ENCODE measurements at regions of chr12 and their contacts with region 1.

Region 1: GRCh38 chr12:109093022-109093918 is at the start of gene ALKBH2:
- DNase-seq: peak; percentile 72
- ATAC-seq: peak; percentile 73
- H3K4me3 ChIP-seq: peak within 1 kb of the TSS; percentile 77
- H3K27ac ChIP-seq: peak within 1 kb of the TSS; percentile 77
- H3K4me1 ChIP-seq: peaks cover 7% of the 10 kb centered on the region
- H3K27me3 ChIP-seq: no peaks in the 10 kb centered on the region
- CTCF ChIP-seq: peak; percentile 98 to 99 (median 98); a peak in 5 of 6 replicates
- EP300 ChIP-seq: no peak
- POLR2A ChIP-seq: peak; percentile 97
- RAD21 ChIP-seq: peak; percentile 75
- polyA plus RNA-seq, gene ALKBH2: 5.6 to 8.8 TPM

Region 2: GRCh38 chr12:108826101-108826806 is 267.0 kb before region 1 on chr12:
- CTCF ChIA-PET with region 1: interaction called, 3 read pairs
- POLR2A ChIA-PET with region 1: no interaction called
- RAD21 ChIA-PET with region 1: interaction called, 3 read pairs
- SMC1A ChIA-PET with region 1: interaction called, 3 read pairs
- in situ Hi-C with region 1: no loop called
- intact Hi-C with region 1: loop called (anchors 5 kb)
- DNase-seq: no peak
- ATAC-seq: peak; percentile 54
- H3K4me3 ChIP-seq: peak overlapping the region; percentile 21; the same call in 1 of the 2 replicates
- H3K27ac ChIP-seq: peak overlapping the region; percentile 60
- H3K4me1 ChIP-seq: peaks cover 81% of the 10 kb centered on the region
- H3K27me3 ChIP-seq: no peaks in the 10 kb centered on the region
- CTCF ChIP-seq: 0 out of 6 replicates have a peak, but pooled peaks of 1 of the 3 experiments have one; percentile 0
- EP300 ChIP-seq: no peak
- POLR2A ChIP-seq: no peak
- RAD21 ChIP-seq: no peak

Region 3: GRCh38 chr12:108950991-108951739 is 142.1 kb before region 1 on chr12:
- CTCF ChIA-PET with region 1: interaction called, 7 read pairs
- POLR2A ChIA-PET with region 1: no interaction called
- RAD21 ChIA-PET with region 1: no interaction called
- SMC1A ChIA-PET with region 1: interaction called, 15 read pairs
- in situ Hi-C with region 1: no loop called
- intact Hi-C with region 1: loop called (anchors 1 kb)
- DNase-seq: peak; percentile 38
- ATAC-seq: peak; percentile 97
- H3K4me3 ChIP-seq: no peak overlapping the region
- H3K27ac ChIP-seq: no peak overlapping the region
- H3K4me1 ChIP-seq: peaks cover 3% of the 10 kb centered on the region; the same call in 1 of the 2 replicates
- H3K27me3 ChIP-seq: no peaks in the 10 kb centered on the region; a peak in 1 of 4 replicates
- CTCF ChIP-seq: peak; percentile 85 to 87 (median 86)
- EP300 ChIP-seq: no peak
- POLR2A ChIP-seq: no peak
- RAD21 ChIP-seq: peak; percentile 92

Region 4: GRCh38 chr12:109052414-109053323 is 40.6 kb before region 1 on chr12 and contains the start of gene USP30:
- CTCF ChIA-PET with region 1: interaction called, 33 read pairs
- POLR2A ChIA-PET with region 1: interaction called, 5 read pairs
- RAD21 ChIA-PET with region 1: interaction called, 4 read pairs
- SMC1A ChIA-PET with region 1: interaction called, 4 read pairs
- in situ Hi-C with region 1: no loop called
- intact Hi-C with region 1: loop called (anchors 2 kb)
- DNase-seq: peak; percentile 45
- ATAC-seq: peak; percentile 84
- H3K4me3 ChIP-seq: peak within 1 kb of the TSS; percentile 83
- H3K27ac ChIP-seq: peak within 1 kb of the TSS; percentile 89
- H3K4me1 ChIP-seq: peaks cover 8% of the 10 kb centered on the region; the same call in 1 of the 2 replicates
- H3K27me3 ChIP-seq: no peaks in the 10 kb centered on the region
- CTCF ChIP-seq: no peak
- EP300 ChIP-seq: no peak
- POLR2A ChIP-seq: peak; percentile 53; the same call in 1 of the 2 replicates
- RAD21 ChIP-seq: no peak
- polyA plus RNA-seq, gene USP30: 2.1 to 3.0 TPM

Measured in GM12878 (cell line).